GM10248 (cell line): ENCODE measurements at regions of chr22 and their contacts with region 1.

Region 1: DNA sequence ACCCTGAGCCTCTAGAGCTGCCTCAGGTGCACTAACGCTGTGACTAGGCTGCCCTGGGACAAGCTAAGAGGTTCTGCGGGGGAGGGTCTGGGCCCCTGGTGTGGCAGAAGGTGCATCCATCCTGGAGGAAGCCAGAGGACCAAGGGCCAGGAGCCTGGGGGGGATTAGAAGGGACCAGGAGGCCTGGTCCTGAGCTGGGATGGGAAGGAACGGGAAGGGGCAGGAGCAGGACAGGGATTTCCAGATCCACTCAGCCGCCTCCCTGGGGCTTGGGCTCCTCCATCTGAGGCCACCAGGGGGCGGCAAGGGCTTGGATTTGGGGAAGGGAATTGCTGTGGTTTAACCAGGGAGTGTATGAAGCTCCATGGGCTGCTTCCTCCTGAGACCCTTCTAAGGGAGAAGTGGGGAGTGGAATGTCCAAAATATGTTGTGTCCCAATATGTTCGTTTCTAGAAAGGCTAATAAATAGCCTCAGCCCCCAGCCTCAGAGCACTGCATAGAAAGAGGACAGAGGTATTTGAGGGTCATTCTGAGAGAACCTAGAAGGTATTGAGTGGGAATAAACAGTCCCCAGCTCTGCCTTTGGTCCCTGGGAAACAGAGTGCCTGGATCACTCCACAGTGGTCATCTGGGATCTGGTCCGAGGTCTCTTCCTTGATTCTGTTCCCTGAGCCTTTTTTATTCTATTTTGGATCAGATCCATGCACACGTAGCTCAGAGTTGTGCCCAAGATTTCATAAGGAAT is 17.4 kb upstream of the PRAME start:
- DNase-seq: peak; percentile 61
- CTCF ChIP-seq: peak; percentile 84

Region 2: GRCh38 chr22:22527312-22527711 is 49.1 kb before region 1 on chr22:
- CTCF ChIA-PET with region 1: no interaction called
- POLR2A ChIA-PET with region 1: no interaction called
- DNase-seq: no peak
- CTCF ChIP-seq: no peak

Region 3: GRCh38 chr22:22552630-22553029 is 23.8 kb before region 1 on chr22:
- CTCF ChIA-PET with region 1: interaction called, 11 read pairs
- POLR2A ChIA-PET with region 1: no interaction called
- DNase-seq: peak; percentile 47
- CTCF ChIP-seq: peak; percentile 33

Region 4: GRCh38 chr22:22565981-22566380 is 10.4 kb before region 1 on chr22:
- CTCF ChIA-PET with region 1: interaction called, 17 read pairs
- POLR2A ChIA-PET with region 1: no interaction called
- DNase-seq: no peak
- CTCF ChIP-seq: no peak

Region 5: DNA sequence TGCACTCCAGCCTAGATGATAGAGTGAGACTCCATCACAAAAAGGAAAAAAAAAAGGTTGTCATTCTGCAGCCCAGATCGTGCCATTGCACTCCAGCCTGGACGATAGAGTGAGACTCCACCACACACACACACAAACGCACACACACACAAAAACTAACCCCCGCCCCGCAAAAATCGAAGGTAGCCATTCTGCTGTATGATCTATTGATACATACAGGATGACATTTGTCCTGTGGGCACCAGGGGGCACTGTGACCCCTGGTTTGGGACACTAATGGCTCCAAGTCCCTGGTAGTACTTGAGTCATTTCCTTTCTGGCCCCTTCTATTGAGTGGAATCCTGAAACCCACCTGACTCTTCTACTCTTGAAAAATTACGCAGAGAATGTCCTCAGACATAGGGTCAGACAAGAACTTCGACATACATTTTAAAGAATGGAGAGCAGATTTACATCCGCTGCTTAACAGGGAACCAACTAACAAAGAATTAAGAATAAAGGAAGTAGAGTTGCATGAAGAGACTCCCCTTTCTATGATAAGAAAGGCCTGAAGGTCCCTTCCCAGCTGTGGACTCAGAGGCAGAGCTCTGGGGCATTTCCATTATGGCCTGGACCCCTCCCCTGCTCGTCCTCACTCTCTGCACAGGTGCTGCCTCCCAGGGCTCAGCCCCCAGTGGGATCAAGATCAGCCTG is 17.7 kb after region 1 on chr22:
- CTCF ChIA-PET with region 1: interaction called, 122 read pairs
- POLR2A ChIA-PET with region 1: no interaction called
- DNase-seq: peak; percentile 75
- CTCF ChIP-seq: peak; percentile 82